ENCODE measurements at regions of chr22 and their contacts with region 1.

Region 1: GRCh38 chr22:39170825-39171622 is 18.5 kb upstream of the CBX7 start:
- DNase-seq: peak; percentile 53
- ATAC-seq: peak; percentile 80
- H3K4me3 ChIP-seq: peak overlapping the region in 1 of 3 experiments; percentile 13; a peak in 1 of 6 replicates
- H3K27ac ChIP-seq: no peak overlapping the region
- H3K4me1 ChIP-seq: peaks cover 54% of the 10 kb centered on the region
- H3K27me3 ChIP-seq: peaks cover 0 to 2% of the 10 kb centered on the region in 2 experiments; a peak in 1 of 5 replicates
- CTCF ChIP-seq: peak; percentile 97
- EP300 ChIP-seq: no peak
- POLR2A ChIP-seq: no peak
- RAD21 ChIP-seq: peak; percentile 97

Region 2: DNA sequence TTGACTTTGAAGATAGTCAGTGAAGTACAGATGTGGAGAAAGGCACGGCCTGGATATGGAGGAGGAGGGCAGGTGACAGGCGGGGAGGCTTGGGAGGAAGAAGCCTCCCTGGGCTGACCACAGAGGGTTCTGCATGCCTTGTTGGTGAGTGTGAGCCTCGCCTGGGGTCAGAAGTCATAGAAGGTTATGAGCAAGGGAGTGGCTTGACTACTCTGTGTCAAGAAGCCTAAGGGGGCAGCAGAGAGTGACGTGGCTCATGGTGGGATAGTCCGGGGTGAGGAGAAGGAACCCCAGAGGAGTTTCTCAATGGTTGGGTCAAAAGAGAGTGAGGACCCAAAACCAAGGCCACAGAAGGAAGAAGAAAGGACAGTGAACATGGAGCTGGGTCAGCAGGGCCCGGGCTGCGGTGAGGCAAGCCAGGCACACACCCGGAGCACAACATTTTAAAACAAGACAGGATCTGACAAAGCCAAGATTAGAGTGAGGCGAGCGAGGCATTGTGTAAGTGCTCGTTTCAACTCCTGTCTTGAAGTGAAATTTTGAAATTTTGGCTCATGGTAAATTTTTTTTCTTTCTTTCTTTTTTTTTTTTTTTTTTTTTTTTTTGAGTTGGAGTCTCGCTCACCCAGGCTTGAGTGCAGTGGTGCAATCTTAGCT is 41.8 kb after region 1 on chr22:
- CTCF ChIA-PET with region 1: interaction called, 6 read pairs
- POLR2A ChIA-PET with region 1: interaction called, 3 read pairs
- in situ Hi-C with region 1: no loop called
- intact Hi-C with region 1: loop called (anchors 5 kb)
- DNase-seq: peak; percentile 52
- ATAC-seq: peak; percentile 69
- H3K4me3 ChIP-seq: no peak overlapping the region
- H3K27ac ChIP-seq: no peak overlapping the region
- H3K4me1 ChIP-seq: peaks cover 26% of the 10 kb centered on the region
- H3K27me3 ChIP-seq: no peaks in the 10 kb centered on the region; a peak in 1 of 5 replicates
- CTCF ChIP-seq: peak; percentile 33; the same call in 1 of the 2 replicates
- EP300 ChIP-seq: no peak
- POLR2A ChIP-seq: no peak
- RAD21 ChIP-seq: no peak

Region 3: DNA sequence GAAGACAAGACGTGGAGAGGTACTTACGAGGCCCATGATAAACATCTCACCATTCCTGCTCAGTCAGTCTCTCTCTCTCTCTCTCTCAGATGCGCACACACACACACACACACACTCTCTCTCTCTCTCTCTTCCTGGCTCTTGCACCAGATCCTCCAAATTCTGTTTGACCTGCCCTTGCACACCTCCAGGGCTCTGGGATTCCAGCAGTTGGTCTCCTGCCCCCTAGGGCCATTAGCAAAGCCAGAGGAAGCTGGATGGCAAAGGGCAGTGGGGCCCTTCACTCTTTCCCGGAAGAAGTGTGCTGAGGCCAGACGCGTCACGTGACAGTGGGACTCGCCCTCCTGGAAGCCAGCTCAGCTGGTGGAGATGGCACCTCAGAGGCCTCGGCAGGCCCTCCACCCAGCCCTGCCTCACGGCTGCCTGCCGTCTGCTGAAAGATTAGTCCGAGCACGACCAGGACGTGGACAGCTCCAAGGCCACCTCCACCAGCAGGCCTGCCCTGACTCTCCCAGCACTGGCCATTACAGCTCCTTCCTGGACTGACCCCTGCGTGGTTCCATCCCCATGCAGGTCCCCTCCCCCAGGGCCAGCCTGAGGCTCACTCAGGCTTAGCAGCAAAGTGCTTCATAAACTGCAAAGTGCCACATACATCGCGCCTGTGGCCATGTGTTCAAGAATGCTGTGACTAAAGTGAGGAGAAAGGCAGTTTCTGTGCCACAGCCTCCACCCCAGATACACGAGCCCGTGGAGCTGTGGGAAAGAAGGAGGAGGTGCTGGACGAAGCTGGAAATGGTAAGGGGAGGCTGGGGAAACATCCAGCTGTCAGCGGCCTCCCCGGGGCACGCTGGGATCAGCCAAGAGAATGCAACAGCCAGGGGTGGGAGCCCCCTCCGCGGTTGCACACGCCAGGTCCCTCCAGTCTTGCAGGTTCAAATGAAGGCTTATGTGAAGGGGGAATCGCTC is 70.1 kb after region 1 on chr22:
- CTCF ChIA-PET with region 1: interaction called, 5 read pairs
- POLR2A ChIA-PET with region 1: interaction called, 7 read pairs
- in situ Hi-C with region 1: loop called (anchors 5 kb)
- intact Hi-C with region 1: loop called (anchors 10 kb)
- DNase-seq: peak; percentile 91
- ATAC-seq: peak; percentile 55
- H3K4me3 ChIP-seq: peak overlapping the region; percentile 67 to 88 (median 75)
- H3K27ac ChIP-seq: peak overlapping the region; percentile 93
- H3K4me1 ChIP-seq: peaks cover 35% of the 10 kb centered on the region
- H3K27me3 ChIP-seq: no peaks in the 10 kb centered on the region; a peak in 1 of 5 replicates
- CTCF ChIP-seq: peak; percentile 61
- EP300 ChIP-seq: peak in 1 of 2 experiments; percentile 55; a peak in 2 of 4 replicates
- POLR2A ChIP-seq: peak; percentile 49 to 80; a peak in 3 of 4 replicates
- RAD21 ChIP-seq: peak; percentile 52

Region 4: GRCh38 chr22:39292561-39293098 is 121.6 kb after region 1 on chr22:
- CTCF ChIA-PET with region 1: no interaction called
- POLR2A ChIA-PET with region 1: no interaction called
- in situ Hi-C with region 1: no loop called
- intact Hi-C with region 1: loop called (anchors 5 kb)
- DNase-seq: peak; percentile 81
- ATAC-seq: peak; percentile 65
- H3K4me3 ChIP-seq: peak overlapping the region in 1 of 3 experiments; percentile 35; a peak in 1 of 6 replicates
- H3K27ac ChIP-seq: no peak overlapping the region
- H3K4me1 ChIP-seq: peaks cover 90% of the 10 kb centered on the region
- H3K27me3 ChIP-seq: peaks cover 5 to 13% of the 10 kb centered on the region in 2 experiments; a peak in 4 of 5 replicates
- CTCF ChIP-seq: no peak
- EP300 ChIP-seq: no peak
- POLR2A ChIP-seq: no peak
- RAD21 ChIP-seq: no peak

Region 5: DNA sequence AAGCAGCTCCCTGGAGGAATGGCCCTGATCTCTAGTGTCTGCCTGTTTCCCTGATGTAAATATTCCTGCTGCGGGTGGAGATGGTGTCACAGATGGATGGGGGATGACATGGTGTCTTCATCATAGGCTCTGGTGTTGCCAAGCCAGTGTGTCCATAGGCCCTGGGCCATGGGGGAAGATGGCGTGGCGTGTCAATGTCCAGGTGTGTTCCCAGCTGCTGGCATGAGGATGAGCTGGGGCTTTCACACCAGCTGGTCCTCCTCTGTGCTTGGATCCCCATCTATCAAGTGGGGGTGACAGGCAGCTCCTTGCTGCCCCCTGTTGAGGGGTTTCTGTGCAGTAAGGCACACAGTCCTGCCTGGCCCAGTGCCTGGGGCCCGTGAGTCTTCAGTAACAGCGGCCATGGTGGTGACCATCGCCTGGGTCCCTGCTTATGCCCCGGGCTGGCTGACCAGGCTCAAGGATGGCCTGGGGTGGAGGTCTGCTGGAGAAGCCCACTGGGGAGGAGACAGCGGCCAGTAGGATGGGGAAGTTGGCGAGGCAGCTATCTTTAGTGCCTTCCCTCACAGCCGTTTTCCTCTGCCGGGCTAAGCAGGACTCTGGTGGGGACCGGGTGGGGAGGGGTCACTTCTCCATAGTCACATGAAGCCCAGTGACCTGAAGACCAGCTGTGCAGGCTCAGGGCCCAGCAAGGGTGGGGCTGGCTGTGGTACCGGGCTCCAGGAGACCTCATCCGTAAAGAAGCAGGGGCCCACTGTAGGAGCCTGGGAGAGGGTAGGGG is 135.7 kb after region 1 on chr22:
- CTCF ChIA-PET with region 1: interaction called, 27 read pairs
- POLR2A ChIA-PET with region 1: interaction called, 16 read pairs
- in situ Hi-C with region 1: loop called (anchors 5 kb)
- intact Hi-C with region 1: loop called (anchors 2 kb)
- DNase-seq: no peak
- ATAC-seq: peak; percentile 8
- H3K4me3 ChIP-seq: no peak overlapping the region
- H3K27ac ChIP-seq: no peak overlapping the region
- H3K4me1 ChIP-seq: peaks cover 67% of the 10 kb centered on the region
- H3K27me3 ChIP-seq: no peaks in the 10 kb centered on the region
- CTCF ChIP-seq: peak; percentile 84
- EP300 ChIP-seq: no peak
- POLR2A ChIP-seq: no peak
- RAD21 ChIP-seq: peak; percentile 60

Measured in HepG2 (cell line).